CD8-positive, alpha-beta memory T cell (primary cell): ENCODE measurements at regions of chr16 and their contacts with region 1.

Region 1: GRCh38 chr16:29961479-29962343 is at the start of gene TMEM219:
- DNase-seq: peak; percentile 92 to 97 (median 95)
- H3K4me3 ChIP-seq: peak within 1 kb of the TSS; percentile 97
- H3K4me3 Mint-ChIP-seq: peak within 1 kb of the TSS; percentile 87 to 97 (median 89)
- H3K27ac ChIP-seq: peak within 1 kb of the TSS; percentile 86
- H3K27ac Mint-ChIP-seq: peak within 1 kb of the TSS; percentile 86 to 98 (median 95)
- H3K4me1 ChIP-seq: peaks cover 15% of the 10 kb centered on the region
- H3K4me1 Mint-ChIP-seq: peaks cover 18 to 30% (median 19%) of the 10 kb centered on the region in 3 donors
- H3K27me3 ChIP-seq: no peaks in the 10 kb centered on the region
- H3K27me3 Mint-ChIP-seq: no peaks in the 10 kb centered on the region
- total RNA-seq, gene TMEM219: 36.8 to 43.4 TPM

Region 2: GRCh38 chr16:29899516-29900101 is 62.1 kb before region 1 on chr16 and contains the start of gene SEZ6L2:
- CTCF ChIA-PET with region 1: no interaction called
- POLR2A ChIA-PET with region 1: no interaction called
- DNase-seq: peak in 1 of 5 donors; percentile 80
- H3K4me3 ChIP-seq: peak within 1 kb of the TSS; percentile 47
- H3K4me3 Mint-ChIP-seq: peak within 1 kb of the TSS; percentile 34 to 78 (median 62)
- H3K27ac ChIP-seq: no peak within 1 kb of the TSS
- H3K27ac Mint-ChIP-seq: no peak within 1 kb of the TSS
- H3K4me1 ChIP-seq: peaks cover 7% of the 10 kb centered on the region
- H3K4me1 Mint-ChIP-seq: peaks cover 0 to 9% (median 5%) of the 10 kb centered on the region in 3 donors
- H3K27me3 ChIP-seq: peaks cover 26% of the 10 kb centered on the region
- H3K27me3 Mint-ChIP-seq: peaks cover 16 to 32% of the 10 kb centered on the region in 2 donors
- total RNA-seq, gene SEZ6L2: 0.07 to 0.15 TPM

Region 3: DNA sequence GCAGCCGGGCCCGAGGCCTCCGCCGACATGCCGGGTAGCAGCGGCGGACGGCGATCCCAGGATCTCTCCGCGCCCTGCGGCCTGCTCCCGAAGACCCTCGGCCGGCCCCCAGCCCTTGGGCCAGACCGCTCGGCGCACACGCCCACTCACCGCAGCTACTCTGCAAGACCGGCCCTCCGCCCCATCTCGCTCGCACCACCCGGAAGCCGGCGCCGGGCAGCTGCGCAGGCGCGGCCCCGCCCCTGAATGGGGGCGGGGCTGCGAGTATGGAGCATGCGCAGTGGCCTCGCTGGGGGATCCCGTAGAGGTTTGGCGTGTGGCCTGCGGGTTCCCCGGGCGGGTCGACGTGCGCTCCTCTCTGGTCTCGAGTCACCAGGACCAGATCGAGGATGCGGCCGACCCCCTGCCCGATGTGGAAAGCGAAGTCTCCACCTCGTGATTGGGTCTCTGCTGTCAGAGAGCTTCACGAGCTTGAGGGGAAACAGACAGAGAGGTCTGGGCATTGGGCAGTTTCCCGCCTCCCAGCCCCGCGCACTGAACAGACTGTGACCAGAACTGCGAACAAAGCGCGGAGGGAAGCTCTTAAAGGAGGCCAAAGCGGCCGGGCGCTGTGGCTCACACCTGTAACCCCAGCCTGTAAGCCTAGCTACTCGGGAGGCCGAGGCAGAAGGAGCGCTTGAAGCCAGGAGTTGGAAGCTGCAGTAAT is 35.6 kb before region 1 on chr16 and contains the start of gene KCTD13:
- CTCF ChIA-PET with region 1: interaction called, 6 read pairs
- POLR2A ChIA-PET with region 1: interaction called, 11 read pairs
- DNase-seq: peak; percentile 80 to 93 (median 89)
- H3K4me3 ChIP-seq: peak within 1 kb of the TSS; percentile 94
- H3K4me3 Mint-ChIP-seq: peak within 1 kb of the TSS; percentile 93 to 98 (median 94)
- H3K27ac ChIP-seq: peak within 1 kb of the TSS; percentile 81
- H3K27ac Mint-ChIP-seq: peak within 1 kb of the TSS; percentile 89 to 98 (median 96)
- H3K4me1 ChIP-seq: peaks cover 18% of the 10 kb centered on the region
- H3K4me1 Mint-ChIP-seq: peaks cover 37 to 52% (median 47%) of the 10 kb centered on the region in 3 donors
- H3K27me3 ChIP-seq: no peaks in the 10 kb centered on the region
- H3K27me3 Mint-ChIP-seq: no peaks in the 10 kb centered on the region
- total RNA-seq, gene KCTD13: 35.7 to 37.1 TPM